Activated CD4-positive, alpha-beta memory T cell treated with anti-CD3 and anti-CD28 coated beads for 36 hours (primary cell): ENCODE measurements at regions of chr10 and their contacts with region 1.

Region 1: DNA sequence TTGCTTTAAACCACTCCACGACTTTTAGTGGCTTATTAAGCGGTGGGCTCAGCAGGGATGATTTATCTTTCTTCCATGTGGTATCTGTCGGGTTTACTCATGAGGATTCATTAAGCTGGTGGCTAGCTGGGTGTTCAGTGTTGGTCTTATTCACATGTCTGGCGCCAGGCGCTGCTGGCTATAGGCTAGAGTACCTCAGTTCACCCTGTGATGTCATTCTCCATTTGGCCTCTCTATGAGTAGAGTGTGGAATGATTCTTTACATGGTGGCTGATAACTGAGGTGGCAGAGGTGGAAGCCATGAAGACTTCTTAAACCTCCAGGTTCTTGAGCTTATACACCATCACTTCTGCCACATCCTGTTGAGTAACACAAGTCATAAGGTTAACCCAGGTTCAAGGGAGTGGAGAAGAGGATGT is 115.4 kb downstream of the MLLT10 start:
- DNase-seq: peak; percentile 33
- H3K4me3 Mint-ChIP-seq: no peak overlapping the region
- H3K27ac Mint-ChIP-seq: peak overlapping the region; percentile 10
- H3K4me1 Mint-ChIP-seq: peaks cover 20% of the 10 kb centered on the region
- H3K27me3 Mint-ChIP-seq: no peaks in the 10 kb centered on the region

Region 2: DNA sequence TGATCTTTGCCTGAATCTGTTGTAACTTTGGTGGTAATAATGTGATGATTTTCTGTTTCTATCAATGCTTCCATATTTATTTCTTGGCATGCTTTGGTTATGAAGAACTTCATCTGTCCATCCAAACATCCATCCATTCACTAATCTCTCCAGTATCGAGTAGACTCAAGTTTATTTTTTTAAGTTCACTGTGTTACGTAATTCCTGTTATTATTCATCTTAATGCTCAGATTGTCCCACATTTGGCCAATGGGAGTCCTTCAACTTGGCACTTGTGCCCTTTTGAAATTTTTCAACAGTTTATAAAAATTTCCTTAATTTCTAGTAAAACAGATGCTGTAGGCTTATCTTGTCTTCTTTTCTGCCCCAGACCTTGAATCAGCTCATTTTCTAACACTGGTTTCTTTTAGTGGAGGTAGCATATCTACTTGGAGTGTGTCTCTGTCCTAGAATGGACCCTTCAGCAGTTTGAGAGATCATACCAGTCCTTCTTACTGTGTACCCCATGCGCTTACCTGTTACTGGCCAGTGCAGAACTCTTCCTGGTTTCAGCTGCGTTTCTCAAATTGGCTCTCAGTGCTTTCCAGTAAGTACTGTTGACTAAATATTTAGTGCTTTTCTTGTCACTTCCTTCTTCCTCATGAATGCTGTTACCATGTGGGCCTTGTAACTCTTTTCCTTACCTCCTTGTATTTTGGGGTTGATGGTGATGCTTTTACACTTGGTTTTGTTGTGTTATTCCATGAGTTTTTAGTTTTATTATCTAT is 14.7 kb before region 1 on chr10:
- CTCF ChIA-PET with region 1: no interaction called
- POLR2A ChIA-PET with region 1: no interaction called
- intact Hi-C with region 1: no loop called
- DNase-seq: no peak
- H3K4me3 Mint-ChIP-seq: no peak overlapping the region
- H3K27ac Mint-ChIP-seq: no peak overlapping the region
- H3K4me1 Mint-ChIP-seq: peaks cover 7% of the 10 kb centered on the region
- H3K27me3 Mint-ChIP-seq: no peaks in the 10 kb centered on the region

Region 3: DNA sequence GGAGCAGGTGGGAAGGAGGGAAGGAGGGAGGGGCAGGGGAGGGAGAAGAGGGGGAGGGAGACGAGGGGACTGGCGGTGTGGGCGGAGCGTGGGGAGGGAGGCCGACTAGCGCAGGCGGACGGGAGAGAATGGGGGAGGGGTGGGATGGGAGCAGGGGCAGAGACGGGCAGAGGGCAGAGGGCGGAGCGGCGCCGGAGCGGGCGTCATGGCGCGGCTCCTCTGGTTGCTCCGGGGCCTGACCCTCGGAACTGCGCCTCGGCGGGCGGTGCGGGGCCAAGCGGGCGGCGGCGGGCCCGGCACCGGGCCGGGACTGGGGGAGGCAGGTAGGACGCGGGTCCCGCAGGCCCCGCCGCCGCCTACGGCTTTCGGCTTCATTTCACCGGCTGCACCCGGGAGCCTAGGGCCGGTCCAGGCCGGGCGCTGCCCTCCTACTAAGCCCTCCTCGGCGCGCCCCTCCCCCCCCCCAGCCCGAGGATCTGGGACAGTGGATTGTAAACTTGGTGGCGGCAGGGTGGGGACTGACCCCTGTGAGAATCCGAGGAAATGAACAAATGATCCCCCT is 1446.0 kb after region 1 on chr10 and contains the start of gene MSRB2:
- CTCF ChIA-PET with region 1: no interaction called
- POLR2A ChIA-PET with region 1: no interaction called
- intact Hi-C with region 1: loop called (anchors 5 kb)
- DNase-seq: peak; percentile 87
- H3K4me3 Mint-ChIP-seq: peak within 1 kb of the TSS; percentile 94
- H3K27ac Mint-ChIP-seq: peak within 1 kb of the TSS; percentile 88
- H3K4me1 Mint-ChIP-seq: peaks cover 38% of the 10 kb centered on the region
- H3K27me3 Mint-ChIP-seq: no peaks in the 10 kb centered on the region
- total RNA-seq, gene MSRB2: 9.4 to 11.1 TPM